Prostate gland (tissue), 2 donors: ENCODE measurements at regions of chr5 and their contacts with region 1.

Region 1: GRCh38 chr5:159050316-159051143 is 49.2 kb downstream of the EBF1 start:
- DNase-seq: no peak
- H3K4me3 ChIP-seq: no peak overlapping the region
- H3K27ac ChIP-seq: peak overlapping the region; percentile 62 to 63
- H3K4me1 ChIP-seq: no peaks in the 10 kb centered on the region
- H3K27me3 ChIP-seq: peaks cover 6% of the 10 kb centered on the region
- CTCF ChIP-seq: no peak
- POLR2A ChIP-seq: no peak

Region 2: DNA sequence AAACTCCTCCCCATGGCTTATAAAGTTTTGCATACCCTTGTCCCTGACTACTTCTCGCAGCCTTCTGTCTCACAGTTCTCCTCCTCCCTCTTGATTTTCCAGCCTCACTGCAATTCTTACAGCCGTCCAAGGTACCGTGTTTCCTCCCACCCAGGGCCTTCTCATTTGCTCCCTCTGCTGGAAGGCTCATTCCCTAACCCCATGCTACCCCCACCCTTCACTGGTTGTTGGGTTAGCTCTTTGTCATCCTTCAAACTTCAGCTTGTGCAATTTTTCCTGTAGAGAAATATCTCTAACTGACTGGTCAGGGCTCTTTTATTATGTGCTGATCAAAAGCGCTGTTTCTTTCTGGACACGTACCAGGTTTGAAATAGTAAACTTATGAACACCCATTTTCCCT is 280.0 kb before region 1 on chr5:
- intact Hi-C with region 1: loop called (anchors 10 kb)
- DNase-seq: no peak
- H3K4me3 ChIP-seq: no peak overlapping the region
- H3K27ac ChIP-seq: no peak overlapping the region
- H3K4me1 ChIP-seq: no peaks in the 10 kb centered on the region
- H3K27me3 ChIP-seq: no peaks in the 10 kb centered on the region
- CTCF ChIP-seq: peak in 1 of 4 experiments; percentile 5
- POLR2A ChIP-seq: no peak

Region 3: DNA sequence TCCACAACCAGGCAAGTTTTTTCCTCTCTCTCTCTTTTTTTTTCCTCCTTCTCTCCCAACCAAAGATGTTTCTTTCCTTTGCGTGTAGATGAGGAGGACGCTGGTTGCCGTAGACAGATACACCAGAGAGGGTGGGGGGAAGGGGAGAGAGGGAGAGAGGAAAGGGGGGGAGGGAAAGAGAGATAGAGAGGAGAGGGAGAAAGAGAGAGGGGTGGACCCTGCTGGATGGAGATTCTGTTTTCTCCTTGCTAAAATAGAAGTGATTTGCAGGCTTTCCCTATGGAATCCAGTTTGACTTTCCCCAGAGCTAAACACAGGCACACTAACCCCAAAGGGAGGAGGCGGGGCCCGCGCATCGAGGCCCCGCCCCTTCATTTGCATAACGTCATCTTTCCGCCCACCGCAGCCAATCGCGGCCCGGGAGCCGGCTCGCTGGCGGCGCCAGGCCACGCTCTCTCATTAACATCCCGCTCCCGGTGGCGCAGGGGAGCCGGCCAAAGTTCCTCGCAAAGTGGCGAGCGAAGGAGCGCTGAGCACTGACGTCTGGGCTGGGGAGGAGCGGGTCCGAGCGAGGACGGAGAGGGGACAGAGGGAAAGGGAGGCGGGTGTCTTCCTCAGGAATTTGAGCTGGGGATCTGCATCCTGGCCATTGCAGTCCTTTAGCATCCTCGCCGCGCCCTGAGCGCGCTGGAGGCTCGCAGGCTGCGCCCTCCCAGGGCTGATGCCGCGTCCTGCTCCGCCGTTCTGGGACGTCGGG is 49.7 kb after region 1 on chr5:
- intact Hi-C with region 1: loop called (anchors 5 kb)
- DNase-seq: peak; percentile 51
- H3K4me3 ChIP-seq: peak overlapping the region; percentile 28 to 35
- H3K27ac ChIP-seq: peak overlapping the region; percentile 58 to 68
- H3K4me1 ChIP-seq: no peaks in the 10 kb centered on the region
- H3K27me3 ChIP-seq: peaks cover 40% of the 10 kb centered on the region
- CTCF ChIP-seq: no peak
- POLR2A ChIP-seq: peak; percentile 59